Activated CD4-positive, alpha-beta memory T cell treated with anti-CD3 and anti-CD28 coated beads, Interleukin-2, amount 10 ng/mL, durations not matched to agents 7 days and 5 days (primary cell): ENCODE measurements at regions of chr19 and their contacts with region 1.

Region 1: GRCh38 chr19:19063183-19064097 is at the start of gene SLC25A42:
- DNase-seq: peak; percentile 99
- H3K4me3 Mint-ChIP-seq: peak within 1 kb of the TSS; percentile 81
- H3K27ac Mint-ChIP-seq: peak within 1 kb of the TSS; percentile 76
- H3K4me1 Mint-ChIP-seq: peaks cover 32% of the 10 kb centered on the region
- H3K27me3 Mint-ChIP-seq: no peaks in the 10 kb centered on the region
- total RNA-seq, gene SLC25A42: 17.6 to 21.0 TPM

Region 2: DNA sequence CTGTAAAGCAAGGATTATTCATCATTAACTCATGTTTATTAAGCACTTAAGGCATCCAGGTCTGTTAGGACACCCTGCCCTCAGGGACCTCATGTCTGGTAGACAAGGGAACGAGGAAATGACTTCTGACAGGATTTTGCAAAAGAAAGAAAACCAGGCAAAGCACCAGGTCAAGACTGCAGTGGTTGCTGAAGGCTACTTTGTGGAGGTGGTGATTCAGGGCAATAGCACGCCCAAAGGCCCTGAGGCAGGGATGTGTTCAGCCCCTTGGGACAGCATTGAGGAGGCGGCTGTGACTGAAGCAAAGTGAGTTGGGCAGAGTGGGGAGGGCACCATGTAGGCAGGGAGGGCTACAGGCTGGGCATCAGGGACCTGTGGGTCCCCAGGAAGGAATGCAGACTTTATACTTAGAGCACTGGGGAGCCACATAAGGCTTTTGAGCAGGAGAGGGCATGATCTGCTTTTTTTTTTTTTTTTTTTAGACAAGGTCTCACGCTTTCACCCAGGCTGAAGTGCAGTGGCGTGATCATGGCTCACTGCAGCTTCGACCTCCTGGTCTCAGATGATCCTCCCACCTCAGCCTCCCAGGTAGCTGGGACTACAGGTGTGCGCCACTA is 111.7 kb before region 1 on chr19:
- CTCF ChIA-PET with region 1: no interaction called
- POLR2A ChIA-PET with region 1: no interaction called
- DNase-seq: no peak
- H3K4me3 Mint-ChIP-seq: no peak overlapping the region
- H3K27ac Mint-ChIP-seq: no peak overlapping the region
- H3K4me1 Mint-ChIP-seq: no peaks in the 10 kb centered on the region
- H3K27me3 Mint-ChIP-seq: no peaks in the 10 kb centered on the region

Region 3: DNA sequence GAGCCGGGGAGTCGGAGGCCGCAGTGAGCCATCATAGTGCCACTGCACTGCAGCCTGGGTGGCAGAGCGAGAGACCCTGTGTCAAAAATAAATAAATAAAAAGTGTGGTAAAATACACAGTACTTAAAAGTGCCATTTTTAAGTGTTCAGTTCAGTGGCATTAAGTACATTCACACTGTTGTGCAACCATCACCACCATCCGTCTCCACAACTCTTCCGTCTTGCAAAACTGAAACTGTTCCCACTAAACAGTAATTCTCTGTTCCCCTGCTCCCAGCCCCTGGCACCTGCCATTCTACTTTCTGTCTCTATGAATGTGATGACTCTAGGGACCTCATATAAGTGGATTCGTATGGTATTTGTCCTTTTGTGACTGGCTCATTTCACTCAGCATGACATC is 13.7 kb after region 1 on chr19:
- CTCF ChIA-PET with region 1: no interaction called
- POLR2A ChIA-PET with region 1: no interaction called
- DNase-seq: no peak
- H3K4me3 Mint-ChIP-seq: no peak overlapping the region
- H3K27ac Mint-ChIP-seq: no peak overlapping the region
- H3K4me1 Mint-ChIP-seq: no peaks in the 10 kb centered on the region
- H3K27me3 Mint-ChIP-seq: no peaks in the 10 kb centered on the region

Region 4: GRCh38 chr19:19115954-19116353 is 52.5 kb after region 1 on chr19:
- CTCF ChIA-PET with region 1: interaction called, 12 read pairs
- POLR2A ChIA-PET with region 1: no interaction called
- DNase-seq: peak; percentile 59
- H3K4me3 Mint-ChIP-seq: no peak overlapping the region
- H3K27ac Mint-ChIP-seq: no peak overlapping the region
- H3K4me1 Mint-ChIP-seq: no peaks in the 10 kb centered on the region
- H3K27me3 Mint-ChIP-seq: no peaks in the 10 kb centered on the region